Activated naive CD4-positive, alpha-beta T cell treated with anti-CD3 and anti-CD28 coated beads for 36 hours (primary cell): ENCODE measurements at regions of chr6 and their contacts with region 1.

Region 1: DNA sequence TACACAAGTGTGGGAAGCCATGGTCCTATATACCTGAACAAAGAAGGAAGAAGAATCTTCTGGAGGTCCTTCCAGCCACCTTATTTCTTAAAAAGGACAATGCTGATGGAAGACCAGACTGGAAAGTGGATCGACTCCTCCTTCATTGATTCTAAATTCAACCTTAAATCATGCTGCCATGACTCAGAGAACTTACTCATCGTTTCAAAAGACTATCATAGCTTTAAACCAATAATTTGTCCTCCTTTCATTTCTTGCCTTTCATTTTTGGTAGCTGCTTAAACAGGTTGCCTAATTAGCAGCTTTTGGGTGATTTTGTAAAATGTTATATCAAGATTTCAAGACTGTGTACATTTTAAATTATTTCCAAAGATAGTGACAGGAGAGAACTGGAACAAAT is 60.8 kb downstream of the RTN4IP1 start:
- DNase-seq: no peak
- H3K4me3 Mint-ChIP-seq: no peak overlapping the region
- H3K27ac Mint-ChIP-seq: no peak overlapping the region
- H3K4me1 Mint-ChIP-seq: peaks cover 7% of the 10 kb centered on the region
- H3K27me3 Mint-ChIP-seq: no peaks in the 10 kb centered on the region

Region 2: DNA sequence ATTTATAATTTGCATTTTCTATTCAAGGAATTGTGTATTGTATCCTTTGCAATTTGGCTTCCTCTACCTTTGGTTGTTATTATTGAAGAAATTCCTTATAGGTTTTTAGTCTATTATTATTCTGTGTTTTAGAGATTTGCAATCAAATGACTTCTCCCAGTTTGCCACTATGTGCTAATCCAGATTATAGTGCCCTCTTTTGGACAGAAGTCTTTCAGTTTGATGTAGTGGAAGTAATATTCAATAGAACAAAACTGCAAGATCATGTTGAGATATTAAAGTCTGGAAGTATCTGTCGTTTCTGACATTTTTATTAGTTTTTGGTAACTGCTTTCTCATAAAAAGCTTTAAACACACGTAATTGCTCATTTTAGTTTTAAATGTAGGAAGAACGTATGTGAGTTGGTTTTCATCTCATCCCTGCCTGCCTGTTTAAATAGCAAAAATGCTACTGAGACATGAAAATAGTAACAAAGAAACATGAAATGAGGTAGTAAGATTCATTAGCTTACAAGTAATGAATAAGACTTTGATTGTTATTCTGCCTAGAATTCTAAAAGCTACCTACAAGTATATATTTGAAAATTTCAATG is 12.1 kb before region 1 on chr6:
- CTCF ChIA-PET with region 1: interaction called, 19 read pairs
- intact Hi-C with region 1: no loop called
- DNase-seq: no peak
- H3K4me3 Mint-ChIP-seq: no peak overlapping the region
- H3K27ac Mint-ChIP-seq: no peak overlapping the region
- H3K4me1 Mint-ChIP-seq: peaks cover 18% of the 10 kb centered on the region
- H3K27me3 Mint-ChIP-seq: no peaks in the 10 kb centered on the region

Region 3: DNA sequence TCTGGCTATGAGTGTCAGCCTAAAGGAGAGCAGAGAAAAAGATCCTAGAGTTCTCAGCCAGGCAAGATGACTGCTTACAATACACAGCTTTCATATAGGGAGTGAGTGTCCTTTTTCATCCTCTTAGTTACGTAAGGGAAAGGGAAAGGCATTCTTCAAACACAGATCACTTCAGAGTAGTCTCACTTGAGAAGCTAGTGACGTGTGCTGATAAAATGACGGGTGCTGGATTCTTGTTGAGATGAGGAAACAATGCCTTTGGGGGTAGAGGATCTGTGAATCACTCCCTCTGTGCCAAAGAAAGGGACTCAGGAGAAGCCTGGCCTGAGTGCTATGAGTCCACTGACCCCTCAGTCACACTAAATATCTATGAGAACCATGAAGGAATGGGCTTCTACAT is 178.1 kb after region 1 on chr6:
- CTCF ChIA-PET with region 1: no interaction called
- intact Hi-C with region 1: no loop called
- DNase-seq: no peak
- H3K4me3 Mint-ChIP-seq: no peak overlapping the region
- H3K27ac Mint-ChIP-seq: no peak overlapping the region
- H3K4me1 Mint-ChIP-seq: no peaks in the 10 kb centered on the region
- H3K27me3 Mint-ChIP-seq: peaks cover 2% of the 10 kb centered on the region